ENCODE measurements at regions of chr4 and their contacts with region 1.

Region 1: DNA sequence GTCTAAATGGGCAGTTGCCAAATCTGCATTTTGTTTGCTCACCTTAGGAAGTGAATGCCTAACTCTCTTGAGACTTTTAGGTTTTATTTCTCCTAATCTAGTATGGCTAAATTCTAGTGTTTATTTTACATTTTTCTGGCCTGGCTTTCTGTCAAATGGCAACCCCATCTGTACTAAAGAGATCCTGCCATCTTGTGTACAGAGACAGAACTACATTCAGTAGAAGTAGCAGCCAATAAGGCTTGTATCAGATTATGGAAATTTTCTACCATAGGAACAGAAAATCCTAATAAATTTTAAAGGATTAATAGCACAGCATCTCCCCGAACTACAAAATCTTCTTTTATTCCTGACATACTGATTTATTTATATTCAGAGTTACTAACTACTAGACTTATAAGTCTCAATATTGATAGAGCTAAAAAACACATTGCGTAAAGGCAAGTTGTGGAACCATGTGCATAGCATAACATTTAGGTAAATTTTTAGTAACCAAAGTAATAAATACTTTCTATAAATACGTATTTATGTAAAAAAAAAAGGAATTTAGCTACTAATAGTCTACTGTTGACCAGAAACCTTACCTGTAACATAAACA is 45.5 kb downstream of the TMEM144 start:
- DNase-seq: peak; percentile 36
- ATAC-seq: peak; percentile 77
- H3K4me3 ChIP-seq: no peak overlapping the region
- H3K27ac ChIP-seq: no peak overlapping the region
- H3K4me1 ChIP-seq: no peaks in the 10 kb centered on the region
- H3K27me3 ChIP-seq: no peaks in the 10 kb centered on the region
- CTCF ChIP-seq: peak; percentile 65 to 84 (median 74)
- POLR2A ChIP-seq: no peak
- RAD21 ChIP-seq: peak; percentile 78

Region 2: DNA sequence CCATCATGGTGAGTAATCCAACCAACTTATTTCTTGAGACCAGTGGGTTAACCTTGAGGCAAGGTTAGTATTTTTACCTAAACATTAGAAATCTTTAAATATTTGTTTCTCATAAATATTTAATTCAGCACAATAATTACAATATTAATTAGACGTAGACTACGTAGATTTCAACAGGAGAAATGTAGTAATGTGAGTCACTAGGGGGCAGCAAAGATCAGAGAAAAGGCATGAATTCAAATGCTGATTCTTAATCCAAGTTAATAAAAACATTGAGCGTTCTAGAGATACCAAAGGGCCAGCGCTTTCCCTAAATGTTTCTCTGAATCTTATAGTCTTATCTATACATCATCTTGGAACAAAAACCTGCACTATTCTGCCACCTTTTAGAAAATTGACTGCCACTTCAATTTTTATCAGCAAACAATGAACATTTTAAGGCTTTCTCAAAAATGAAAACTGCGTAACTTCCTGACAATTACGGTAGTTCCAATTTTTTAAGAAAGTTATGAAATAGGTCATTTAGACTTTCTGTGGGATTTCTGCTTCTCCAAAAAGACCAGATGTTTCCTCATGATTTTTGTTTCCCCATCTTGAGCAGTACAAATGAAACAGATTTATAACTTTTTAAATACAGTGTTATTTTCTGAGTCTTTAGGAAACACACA is 263.7 kb before region 1 on chr4:
- CTCF ChIA-PET with region 1: interaction called, 9 read pairs
- POLR2A ChIA-PET with region 1: interaction called, 3 read pairs
- RAD21 ChIA-PET with region 1: no interaction called
- intact Hi-C with region 1: loop called (anchors 1 kb)
- DNase-seq: peak; percentile 73
- ATAC-seq: peak; percentile 73
- H3K4me3 ChIP-seq: peak overlapping the region; percentile 13 to 35; a peak in 3 of 4 replicates
- H3K27ac ChIP-seq: no peak overlapping the region
- H3K4me1 ChIP-seq: peaks cover 0 to 4% of the 10 kb centered on the region in 2 experiments; a peak in 2 of 4 replicates
- H3K27me3 ChIP-seq: no peaks in the 10 kb centered on the region
- CTCF ChIP-seq: peak; percentile 54 to 85 (median 65)
- POLR2A ChIP-seq: no peak
- RAD21 ChIP-seq: peak; percentile 94

Region 3: GRCh38 chr4:158193171-158193749 is 62.6 kb before region 1 on chr4:
- CTCF ChIA-PET with region 1: interaction called, 27 read pairs
- POLR2A ChIA-PET with region 1: no interaction called
- RAD21 ChIA-PET with region 1: interaction called in 1 of 2 experiments, 4 read pairs
- intact Hi-C with region 1: loop called (anchors 1 kb)
- DNase-seq: peak; percentile 40
- ATAC-seq: peak; percentile 83
- H3K4me3 ChIP-seq: no peak overlapping the region
- H3K27ac ChIP-seq: no peak overlapping the region
- H3K4me1 ChIP-seq: no peaks in the 10 kb centered on the region
- H3K27me3 ChIP-seq: no peaks in the 10 kb centered on the region
- CTCF ChIP-seq: peak; percentile 53 to 70 (median 62); a peak in 5 of 6 replicates
- POLR2A ChIP-seq: no peak
- RAD21 ChIP-seq: peak; percentile 70

Region 4: GRCh38 chr4:158203436-158203835 is 52.4 kb before region 1 on chr4:
- CTCF ChIA-PET with region 1: no interaction called
- POLR2A ChIA-PET with region 1: no interaction called
- RAD21 ChIA-PET with region 1: no interaction called
- intact Hi-C with region 1: no loop called
- DNase-seq: no peak
- ATAC-seq: no peak
- H3K4me3 ChIP-seq: no peak overlapping the region
- H3K27ac ChIP-seq: no peak overlapping the region
- H3K4me1 ChIP-seq: no peaks in the 10 kb centered on the region
- H3K27me3 ChIP-seq: no peaks in the 10 kb centered on the region
- CTCF ChIP-seq: no peak
- POLR2A ChIP-seq: no peak
- RAD21 ChIP-seq: no peak

Region 5: DNA sequence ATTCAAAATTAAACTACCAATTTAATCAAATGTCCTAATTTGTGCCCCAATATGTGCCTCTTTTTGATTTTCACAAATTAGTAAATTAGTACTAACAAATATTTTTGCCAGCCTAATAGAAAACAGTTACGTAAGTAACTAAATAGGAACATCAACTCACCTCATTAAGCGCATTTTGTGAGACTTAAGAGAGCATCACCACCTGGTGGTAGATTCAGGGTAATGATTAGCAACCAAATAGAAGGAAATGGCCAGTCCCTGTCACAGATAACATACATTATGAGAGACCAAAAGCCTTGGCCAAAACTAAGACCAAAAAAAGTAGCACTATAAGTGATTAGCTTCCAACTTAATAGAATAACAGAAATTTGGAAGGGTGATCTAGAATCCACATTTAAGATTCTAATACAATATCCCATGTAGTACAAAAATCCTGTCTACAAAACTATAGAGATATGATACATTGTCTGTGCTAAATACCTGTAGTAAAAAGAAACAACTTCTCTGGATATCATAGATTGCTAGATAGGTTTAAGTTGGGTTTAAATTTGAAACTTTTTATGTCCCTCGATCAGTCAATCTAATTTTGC is 369.2 kb after region 1 on chr4:
- CTCF ChIA-PET with region 1: interaction called, 7 read pairs
- POLR2A ChIA-PET with region 1: no interaction called
- RAD21 ChIA-PET with region 1: no interaction called
- intact Hi-C with region 1: loop called (anchors 1 kb)
- DNase-seq: peak; percentile 58
- ATAC-seq: peak; percentile 89
- H3K4me3 ChIP-seq: no peak overlapping the region
- H3K27ac ChIP-seq: no peak overlapping the region
- H3K4me1 ChIP-seq: no peaks in the 10 kb centered on the region
- H3K27me3 ChIP-seq: no peaks in the 10 kb centered on the region
- CTCF ChIP-seq: peak; percentile 72 to 84 (median 77)
- POLR2A ChIP-seq: no peak
- RAD21 ChIP-seq: peak; percentile 86

Region 6: GRCh38 chr4:158850800-158851644 is 595.2 kb after region 1 on chr4:
- CTCF ChIA-PET with region 1: interaction called, 3 read pairs
- POLR2A ChIA-PET with region 1: no interaction called
- RAD21 ChIA-PET with region 1: no interaction called
- intact Hi-C with region 1: loop called (anchors 5 kb)
- DNase-seq: peak; percentile 15
- ATAC-seq: no peak
- H3K4me3 ChIP-seq: no peak overlapping the region
- H3K27ac ChIP-seq: no peak overlapping the region
- H3K4me1 ChIP-seq: no peaks in the 10 kb centered on the region
- H3K27me3 ChIP-seq: no peaks in the 10 kb centered on the region
- CTCF ChIP-seq: peak; percentile 55 to 71 (median 66); a peak in 5 of 6 replicates
- POLR2A ChIP-seq: no peak
- RAD21 ChIP-seq: peak; percentile 65

Region 7: DNA sequence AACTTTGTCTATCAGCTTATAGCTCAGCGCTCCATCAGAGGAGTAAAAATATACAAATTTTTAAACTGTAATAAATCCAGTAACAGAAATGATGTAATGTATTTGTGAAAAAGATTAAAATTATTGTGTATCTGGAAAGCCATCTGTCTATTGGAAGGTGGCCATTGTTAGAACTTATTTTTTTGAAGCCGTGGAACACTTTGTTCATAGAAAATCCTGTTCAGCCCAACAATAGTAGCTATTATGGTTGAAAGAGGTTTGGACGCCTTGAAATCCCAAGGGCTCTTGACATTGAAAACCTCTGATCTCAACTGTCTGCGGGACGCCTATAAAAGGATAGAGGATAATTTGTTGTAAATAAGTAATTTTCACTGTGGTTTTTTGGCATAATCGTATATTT is 945.3 kb after region 1 on chr4:
- CTCF ChIA-PET with region 1: no interaction called
- POLR2A ChIA-PET with region 1: no interaction called
- RAD21 ChIA-PET with region 1: no interaction called
- intact Hi-C with region 1: loop called (anchors 5 kb)
- DNase-seq: no peak
- ATAC-seq: no peak
- H3K4me3 ChIP-seq: no peak overlapping the region
- H3K27ac ChIP-seq: no peak overlapping the region
- H3K4me1 ChIP-seq: no peaks in the 10 kb centered on the region
- H3K27me3 ChIP-seq: no peaks in the 10 kb centered on the region
- CTCF ChIP-seq: no peak
- POLR2A ChIP-seq: no peak
- RAD21 ChIP-seq: no peak

Region 8: GRCh38 chr4:159446266-159446976 is 1190.6 kb after region 1 on chr4:
- CTCF ChIA-PET with region 1: no interaction called
- POLR2A ChIA-PET with region 1: no interaction called
- RAD21 ChIA-PET with region 1: no interaction called
- intact Hi-C with region 1: loop called (anchors 5 kb)
- DNase-seq: peak; percentile 61
- ATAC-seq: peak; percentile 100
- H3K4me3 ChIP-seq: no peak overlapping the region
- H3K27ac ChIP-seq: no peak overlapping the region
- H3K4me1 ChIP-seq: peaks cover 0 to 3% of the 10 kb centered on the region in 2 experiments; a peak in 1 of 4 replicates
- H3K27me3 ChIP-seq: no peaks in the 10 kb centered on the region
- CTCF ChIP-seq: peak; percentile 64 to 95 (median 90); a peak in 5 of 6 replicates
- POLR2A ChIP-seq: no peak
- RAD21 ChIP-seq: peak; percentile 90